ENCODE measurements at regions of chr3 and their contacts with region 1.

Region 1: GRCh38 chr3:71710906-71711494 is 14.2 kb downstream of the EIF4E3 start:
- DNase-seq: peak in 4 of 5 donors; percentile 50 to 59 (median 56)
- H3K4me3 ChIP-seq: no peak overlapping the region
- H3K4me3 Mint-ChIP-seq: peak overlapping the region in 3 of 8 donors; percentile 25 to 47 (median 25)
- H3K27ac ChIP-seq: no peak overlapping the region
- H3K27ac Mint-ChIP-seq: peak overlapping the region in 3 of 7 donors; percentile 80 to 83 (median 81)
- H3K4me1 ChIP-seq: peaks cover 87% of the 10 kb centered on the region
- H3K4me1 Mint-ChIP-seq: peaks cover 66 to 92% (median 74%) of the 10 kb centered on the region in 4 donors
- H3K27me3 ChIP-seq: no peaks in the 10 kb centered on the region
- H3K27me3 Mint-ChIP-seq: no peaks in the 10 kb centered on the region

Region 2: GRCh38 chr3:71629711-71630110 is 81.3 kb before region 1 on chr3:
- CTCF ChIA-PET with region 1: no interaction called
- POLR2A ChIA-PET with region 1: no interaction called
- intact Hi-C with region 1: no loop called
- DNase-seq: no peak
- H3K4me3 ChIP-seq: no peak overlapping the region
- H3K4me3 Mint-ChIP-seq: no peak overlapping the region
- H3K27ac ChIP-seq: no peak overlapping the region
- H3K27ac Mint-ChIP-seq: no peak overlapping the region
- H3K4me1 ChIP-seq: no peaks in the 10 kb centered on the region
- H3K4me1 Mint-ChIP-seq: peaks cover 0 to 1% (median under 1%) of the 10 kb centered on the region in 4 donors
- H3K27me3 ChIP-seq: no peaks in the 10 kb centered on the region
- H3K27me3 Mint-ChIP-seq: no peaks in the 10 kb centered on the region

Region 3: DNA sequence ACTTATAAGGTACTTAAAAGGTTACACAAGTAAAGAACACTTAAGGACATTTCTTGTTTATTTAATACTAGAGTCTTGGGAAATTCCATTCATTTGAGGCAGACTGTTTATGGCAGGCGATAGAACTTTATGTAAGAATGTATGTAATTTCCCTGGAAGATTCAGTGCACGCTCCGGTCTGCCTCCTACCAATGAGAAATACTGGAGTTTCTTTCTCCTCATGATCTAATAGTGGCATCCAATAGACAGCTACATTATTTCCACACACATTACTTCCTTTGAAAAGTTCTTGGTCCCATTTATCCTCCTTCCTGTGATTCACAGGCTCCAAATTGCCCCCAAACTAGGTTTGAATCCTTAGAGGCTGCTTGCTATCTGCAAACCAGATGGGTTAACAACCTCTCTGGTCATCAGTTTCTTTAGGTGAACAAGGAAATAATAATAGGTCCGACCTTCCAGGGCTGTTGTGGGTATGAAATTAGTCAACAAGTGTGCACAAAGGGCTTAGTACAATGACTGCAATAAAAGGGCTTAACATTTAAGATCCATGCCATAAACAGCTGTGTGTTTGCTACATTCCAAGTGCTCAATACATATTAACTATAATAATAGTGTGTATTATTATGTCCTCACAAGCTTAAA is 16.5 kb before region 1 on chr3:
- CTCF ChIA-PET with region 1: interaction called, 11 read pairs
- POLR2A ChIA-PET with region 1: no interaction called
- intact Hi-C with region 1: no loop called
- DNase-seq: no peak
- H3K4me3 ChIP-seq: no peak overlapping the region
- H3K4me3 Mint-ChIP-seq: no peak overlapping the region
- H3K27ac ChIP-seq: no peak overlapping the region
- H3K27ac Mint-ChIP-seq: peak overlapping the region in 1 of 7 donors; percentile 73
- H3K4me1 ChIP-seq: no peaks in the 10 kb centered on the region
- H3K4me1 Mint-ChIP-seq: peaks cover 0 to 19% (median 12%) of the 10 kb centered on the region in 4 donors
- H3K27me3 ChIP-seq: no peaks in the 10 kb centered on the region
- H3K27me3 Mint-ChIP-seq: no peaks in the 10 kb centered on the region

Region 4: GRCh38 chr3:71859123-71859519 is 148.1 kb after region 1 on chr3:
- CTCF ChIA-PET with region 1: interaction called, 65 read pairs
- POLR2A ChIA-PET with region 1: no interaction called
- intact Hi-C with region 1: loop called (anchors 1 kb)
- DNase-seq: peak; percentile 33 to 68 (median 64)
- H3K4me3 ChIP-seq: no peak overlapping the region
- H3K4me3 Mint-ChIP-seq: peak overlapping the region in 1 of 8 donors; percentile 21
- H3K27ac ChIP-seq: no peak overlapping the region
- H3K27ac Mint-ChIP-seq: peak overlapping the region in 1 of 7 donors; percentile 33
- H3K4me1 ChIP-seq: peaks cover 7% of the 10 kb centered on the region
- H3K4me1 Mint-ChIP-seq: peaks cover 5 to 11% (median 7%) of the 10 kb centered on the region in 4 donors
- H3K27me3 ChIP-seq: no peaks in the 10 kb centered on the region
- H3K27me3 Mint-ChIP-seq: peaks cover 17 to 26% of the 10 kb centered on the region in 2 donors

Measured in CD4-positive, alpha-beta memory T cell (primary cell).